Naive thymus-derived CD4-positive, alpha-beta T cell (primary cell): ENCODE measurements at regions of chr3 and their contacts with region 1.

Region 1: GRCh38 chr3:71006810-71007785 is 576.4 kb downstream of the FOXP1 start:
- DNase-seq: peak in 5 of 9 donors; percentile 25 to 45 (median 40)
- ATAC-seq: peak; percentile 54
- H3K4me3 ChIP-seq: no peak overlapping the region
- H3K4me3 Mint-ChIP-seq: peak overlapping the region in 5 of 10 donors; percentile 34 to 62 (median 49)
- H3K27ac ChIP-seq: peak overlapping the region; percentile 74
- H3K27ac Mint-ChIP-seq: peak overlapping the region in 8 of 9 donors; percentile 40 to 91 (median 87)
- H3K4me1 ChIP-seq: peaks cover 20 to 49% of the 10 kb centered on the region in 2 donors
- H3K4me1 Mint-ChIP-seq: peaks cover 35 to 84% (median 75%) of the 10 kb centered on the region in 7 donors
- H3K27me3 ChIP-seq: no peaks in the 10 kb centered on the region
- H3K27me3 Mint-ChIP-seq: no peaks in the 10 kb centered on the region

Region 2: GRCh38 chr3:69342074-69342473 is 1665.0 kb before region 1 on chr3:
- CTCF ChIA-PET with region 1: no interaction called
- POLR2A ChIA-PET with region 1: no interaction called
- intact Hi-C with region 1: no loop called
- DNase-seq: no peak
- ATAC-seq: no peak
- H3K4me3 ChIP-seq: no peak overlapping the region
- H3K4me3 Mint-ChIP-seq: no peak overlapping the region
- H3K27ac ChIP-seq: no peak overlapping the region
- H3K27ac Mint-ChIP-seq: no peak overlapping the region
- H3K4me1 ChIP-seq: no peaks in the 10 kb centered on the region
- H3K4me1 Mint-ChIP-seq: peaks cover 0 to 4% (median 0%) of the 10 kb centered on the region in 7 donors
- H3K27me3 ChIP-seq: no peaks in the 10 kb centered on the region
- H3K27me3 Mint-ChIP-seq: peaks cover 4 to 9% (median 5%) of the 10 kb centered on the region in 5 donors

Region 3: GRCh38 chr3:69410250-69410649 is 1596.8 kb before region 1 on chr3:
- CTCF ChIA-PET with region 1: no interaction called
- POLR2A ChIA-PET with region 1: no interaction called
- intact Hi-C with region 1: no loop called
- DNase-seq: peak; percentile 9 to 60 (median 46)
- ATAC-seq: peak; percentile 93
- H3K4me3 ChIP-seq: no peak overlapping the region
- H3K4me3 Mint-ChIP-seq: no peak overlapping the region
- H3K27ac ChIP-seq: no peak overlapping the region
- H3K27ac Mint-ChIP-seq: no peak overlapping the region
- H3K4me1 ChIP-seq: no peaks in the 10 kb centered on the region
- H3K4me1 Mint-ChIP-seq: peaks cover 1 to 10% (median 5%) of the 10 kb centered on the region in 7 donors
- H3K27me3 ChIP-seq: no peaks in the 10 kb centered on the region
- H3K27me3 Mint-ChIP-seq: peaks cover 0 to 3% (median 0%) of the 10 kb centered on the region in 5 donors

Region 4: DNA sequence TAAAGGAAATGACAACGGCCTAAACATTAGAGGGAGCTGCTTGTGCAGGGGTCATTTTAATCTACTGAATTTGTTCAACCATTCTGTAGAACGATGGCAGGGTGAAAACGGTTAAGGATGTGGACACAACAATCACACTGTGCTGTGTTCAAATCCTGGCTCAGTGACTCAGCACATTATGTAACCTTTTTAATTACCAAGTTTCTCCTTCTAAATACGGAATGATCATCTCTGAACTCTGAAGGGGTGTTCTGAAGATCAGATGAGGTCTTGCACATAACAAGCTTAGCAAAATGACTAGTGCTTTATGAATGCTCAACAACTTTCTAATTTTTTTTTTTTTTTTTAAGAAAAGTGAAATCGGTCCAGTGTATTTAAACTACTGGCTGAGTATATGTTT is 16.4 kb before region 1 on chr3:
- CTCF ChIA-PET with region 1: interaction called, 4 read pairs
- POLR2A ChIA-PET with region 1: no interaction called
- intact Hi-C with region 1: loop called in 1 of 2 experiments (anchors 2 kb)
- DNase-seq: no peak
- ATAC-seq: no peak
- H3K4me3 ChIP-seq: no peak overlapping the region
- H3K4me3 Mint-ChIP-seq: peak overlapping the region in 8 of 10 donors; percentile 46 to 80 (median 56)
- H3K27ac ChIP-seq: peak overlapping the region; percentile 17
- H3K27ac Mint-ChIP-seq: peak overlapping the region in 7 of 9 donors; percentile 56 to 90 (median 88)
- H3K4me1 ChIP-seq: peaks cover 17 to 35% of the 10 kb centered on the region in 2 donors
- H3K4me1 Mint-ChIP-seq: peaks cover 28 to 95% (median 82%) of the 10 kb centered on the region in 7 donors
- H3K27me3 ChIP-seq: no peaks in the 10 kb centered on the region
- H3K27me3 Mint-ChIP-seq: no peaks in the 10 kb centered on the region

Region 5: GRCh38 chr3:71039332-71039731 is 32.2 kb after region 1 on chr3:
- CTCF ChIA-PET with region 1: no interaction called
- POLR2A ChIA-PET with region 1: interaction called, 3 read pairs
- intact Hi-C with region 1: loop called in 1 of 2 experiments (anchors 1 kb)
- DNase-seq: peak in 6 of 9 donors; percentile 39 to 61 (median 48)
- ATAC-seq: peak; percentile 85
- H3K4me3 ChIP-seq: no peak overlapping the region
- H3K4me3 Mint-ChIP-seq: peak overlapping the region; percentile 28 to 79 (median 67)
- H3K27ac ChIP-seq: peak overlapping the region; percentile 16
- H3K27ac Mint-ChIP-seq: peak overlapping the region; percentile 66 to 91 (median 81)
- H3K4me1 ChIP-seq: peaks cover 15 to 55% of the 10 kb centered on the region in 2 donors
- H3K4me1 Mint-ChIP-seq: peaks cover 45 to 99% (median 90%) of the 10 kb centered on the region in 7 donors
- H3K27me3 ChIP-seq: no peaks in the 10 kb centered on the region
- H3K27me3 Mint-ChIP-seq: no peaks in the 10 kb centered on the region

Region 6: DNA sequence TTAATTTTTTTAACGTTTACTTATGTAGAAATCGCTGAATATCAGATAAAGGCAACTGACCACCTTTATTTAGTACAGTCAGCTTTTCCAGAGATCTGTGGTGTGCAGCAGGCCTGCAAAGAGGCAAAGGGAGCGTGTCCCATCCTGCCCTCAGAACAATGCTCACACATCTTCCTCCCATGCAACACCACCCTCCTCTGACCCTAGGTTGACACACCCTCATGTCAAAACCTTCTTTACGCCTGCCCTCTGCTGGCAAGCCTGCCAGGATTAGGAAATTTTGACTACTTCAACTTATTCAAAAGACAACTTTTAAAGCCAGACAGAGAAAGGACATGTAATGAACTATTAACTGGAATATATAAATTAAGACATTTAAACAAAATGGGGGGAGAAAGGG is 62.7 kb after region 1 on chr3:
- CTCF ChIA-PET with region 1: interaction called, 15 read pairs
- POLR2A ChIA-PET with region 1: interaction called, 4 read pairs
- intact Hi-C with region 1: loop called (anchors 1 kb)
- DNase-seq: peak; percentile 26 to 72 (median 68)
- ATAC-seq: peak; percentile 60
- H3K4me3 ChIP-seq: no peak overlapping the region
- H3K4me3 Mint-ChIP-seq: peak overlapping the region in 7 of 10 donors; percentile 1 to 52 (median 37)
- H3K27ac ChIP-seq: peak overlapping the region; percentile 34
- H3K27ac Mint-ChIP-seq: peak overlapping the region in 8 of 9 donors; percentile 76 to 91 (median 84)
- H3K4me1 ChIP-seq: peaks cover 44 to 81% of the 10 kb centered on the region in 2 donors
- H3K4me1 Mint-ChIP-seq: peaks cover 55 to 90% (median 86%) of the 10 kb centered on the region in 7 donors
- H3K27me3 ChIP-seq: no peaks in the 10 kb centered on the region
- H3K27me3 Mint-ChIP-seq: no peaks in the 10 kb centered on the region

Region 7: DNA sequence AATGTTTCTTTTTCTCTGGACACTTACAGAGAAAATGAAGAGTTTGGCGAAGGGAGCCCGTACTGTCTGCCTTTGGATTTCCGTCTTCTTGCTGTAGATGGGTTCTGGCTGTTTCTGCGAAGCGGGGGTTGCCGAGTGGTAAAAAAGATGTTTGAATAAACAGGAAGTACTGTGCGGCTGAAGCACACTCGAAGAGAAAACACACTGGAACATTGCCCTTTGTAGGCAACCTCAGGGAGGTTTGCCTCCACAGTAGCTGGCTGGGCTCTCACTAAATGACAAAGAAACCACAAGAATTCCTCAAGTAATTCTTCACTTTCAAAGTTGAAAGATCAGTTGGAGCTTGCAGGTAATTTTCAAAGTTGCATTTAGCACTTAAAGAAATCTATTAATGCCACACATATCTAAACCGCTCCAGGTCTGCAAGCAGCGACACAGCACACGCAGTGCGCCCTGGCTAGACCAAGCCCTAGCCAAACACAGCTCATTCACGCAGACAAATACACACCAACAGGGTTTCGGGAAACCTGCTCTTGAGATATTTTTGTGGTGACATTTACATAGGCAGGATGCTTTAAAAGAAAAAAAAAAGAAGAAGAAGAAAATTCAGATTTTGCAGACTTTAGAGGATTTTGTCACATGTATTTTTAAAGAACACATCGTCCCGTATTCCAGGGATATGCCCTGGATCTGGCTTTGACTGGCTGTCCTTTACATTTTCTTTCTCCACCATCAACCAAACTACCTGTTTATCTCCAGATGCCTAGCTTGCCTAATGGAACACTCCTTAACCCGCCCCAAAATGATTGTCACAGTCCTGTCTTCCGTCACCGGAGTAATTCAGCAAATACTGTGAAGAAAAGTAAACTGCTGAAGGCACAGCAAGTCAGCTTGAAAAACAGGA is 123.6 kb after region 1 on chr3:
- CTCF ChIA-PET with region 1: no interaction called
- POLR2A ChIA-PET with region 1: interaction called, 3 read pairs
- intact Hi-C with region 1: loop called (anchors 1 kb)
- DNase-seq: peak; percentile 33 to 90 (median 85)
- ATAC-seq: peak; percentile 86
- H3K4me3 ChIP-seq: peak overlapping the region; percentile 71
- H3K4me3 Mint-ChIP-seq: peak overlapping the region; percentile 85 to 99 (median 93)
- H3K27ac ChIP-seq: peak overlapping the region; percentile 89
- H3K27ac Mint-ChIP-seq: peak overlapping the region; percentile 94 to 99 (median 97)
- H3K4me1 ChIP-seq: peaks cover 42 to 51% of the 10 kb centered on the region in 2 donors
- H3K4me1 Mint-ChIP-seq: peaks cover 49 to 85% (median 80%) of the 10 kb centered on the region in 7 donors
- H3K27me3 ChIP-seq: no peaks in the 10 kb centered on the region
- H3K27me3 Mint-ChIP-seq: no peaks in the 10 kb centered on the region

Region 8: DNA sequence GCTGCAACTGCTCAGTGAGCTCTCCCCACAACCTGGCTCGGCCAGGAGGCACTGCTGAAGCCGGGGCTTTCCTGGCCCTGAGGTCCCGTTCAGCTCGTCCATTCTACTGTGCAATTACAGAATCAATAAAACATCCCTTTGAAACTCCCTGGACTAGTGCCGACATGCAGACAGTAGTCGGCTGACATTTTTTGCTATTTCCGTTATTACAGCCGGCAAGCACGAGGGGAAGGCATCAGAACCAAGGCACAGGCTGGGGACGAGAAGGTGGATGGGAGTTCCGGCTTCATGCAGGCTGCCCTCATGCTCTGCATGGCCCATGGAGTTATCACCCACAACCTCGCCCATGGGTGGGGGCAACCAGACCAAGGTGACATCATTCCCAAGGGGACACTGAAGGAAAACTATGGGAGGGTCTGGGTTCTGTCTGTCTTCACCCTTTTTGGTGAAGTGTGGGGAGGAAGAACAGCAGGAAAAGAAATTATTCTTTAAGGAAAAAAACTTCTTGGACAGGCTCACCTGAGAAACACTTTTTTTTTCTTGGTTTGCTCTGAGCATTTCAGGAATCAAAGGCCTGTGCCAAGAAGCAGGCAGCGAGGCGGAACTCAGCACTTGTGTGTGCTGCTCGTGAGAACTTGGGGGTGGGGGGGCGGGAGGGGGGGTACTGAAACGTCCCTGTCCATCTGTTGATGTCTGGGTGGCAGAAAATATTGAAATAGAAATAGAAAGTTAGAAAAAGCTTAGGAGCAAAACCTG is 421.9 kb after region 1 on chr3:
- CTCF ChIA-PET with region 1: no interaction called
- POLR2A ChIA-PET with region 1: interaction called, 5 read pairs
- intact Hi-C with region 1: loop called in 1 of 2 experiments (anchors 5 kb)
- DNase-seq: peak in 1 of 9 donors; percentile 43
- ATAC-seq: peak; percentile 26
- H3K4me3 ChIP-seq: peak overlapping the region; percentile 23
- H3K4me3 Mint-ChIP-seq: peak overlapping the region in 9 of 10 donors; percentile 65 to 81 (median 77)
- H3K27ac ChIP-seq: peak overlapping the region; percentile 68
- H3K27ac Mint-ChIP-seq: peak overlapping the region; percentile 7 to 99 (median 95)
- H3K4me1 ChIP-seq: peaks cover 25 to 88% of the 10 kb centered on the region in 2 donors
- H3K4me1 Mint-ChIP-seq: peaks cover 55 to 100% (median 97%) of the 10 kb centered on the region in 7 donors
- H3K27me3 ChIP-seq: no peaks in the 10 kb centered on the region
- H3K27me3 Mint-ChIP-seq: peaks cover 0 to 31% (median 0%) of the 10 kb centered on the region in 5 donors